ENCODE measurements at regions of chr14 and their contacts with region 1.

Region 1: DNA sequence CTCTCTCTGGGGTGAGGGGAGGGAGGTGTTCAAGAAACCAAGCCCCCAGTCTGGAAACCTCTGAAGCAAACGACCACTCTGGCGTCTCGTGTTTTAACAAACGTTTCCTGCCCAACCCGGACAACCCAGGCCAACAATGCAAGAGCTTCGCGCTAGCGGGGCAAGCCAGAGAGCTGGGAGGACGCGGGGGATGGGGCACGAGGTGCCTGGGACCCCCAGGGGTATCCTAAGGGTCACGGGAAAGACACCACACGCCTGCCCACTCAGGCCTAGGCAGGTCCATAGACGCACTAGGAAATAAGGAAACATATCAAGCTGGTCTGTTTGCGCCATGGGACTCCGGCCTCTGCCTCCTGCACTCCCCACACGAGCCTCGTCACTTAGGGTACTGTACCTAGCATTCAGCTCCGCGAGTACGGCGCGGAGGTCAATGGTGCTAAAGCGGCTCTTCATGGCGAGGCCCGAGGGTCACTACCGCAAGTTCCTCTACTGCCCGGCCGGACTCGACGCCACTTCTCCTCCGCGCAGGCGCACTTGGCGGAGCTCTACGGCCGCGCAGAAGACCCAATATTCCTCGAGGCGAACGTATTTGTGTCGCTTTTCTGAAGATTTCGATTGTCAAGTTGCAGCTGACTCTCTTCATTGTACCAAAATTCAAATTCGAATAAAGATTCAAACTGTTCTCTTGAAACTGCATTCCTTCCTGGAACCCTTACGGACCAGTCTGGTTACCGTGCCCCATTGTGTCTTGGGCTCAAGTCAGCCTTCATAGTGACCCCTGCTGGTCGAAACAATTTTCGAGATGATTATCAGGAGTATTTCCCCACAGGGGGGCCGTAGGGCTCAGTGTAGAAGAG is at the start of gene NEMF:
- DNase-seq: peak; percentile 83
- H3K4me3 ChIP-seq: peak within 1 kb of the TSS; percentile 54 to 96 (median 65)
- H3K27ac ChIP-seq: peak within 1 kb of the TSS; percentile 77
- H3K4me1 ChIP-seq: peaks cover 7% of the 10 kb centered on the region
- H3K27me3 ChIP-seq: no peaks in the 10 kb centered on the region
- CTCF ChIP-seq: peak; percentile 76 to 77
- total RNA-seq, gene NEMF: 44.8 to 57.7 TPM

Region 2: GRCh38 chr14:49620182-49621113 is 232.1 kb before region 1 on chr14 and contains the starts of genes MGAT2 and RPL36AL:
- CTCF ChIA-PET with region 1: interaction called, 10 read pairs
- dilution Hi-C with region 1: no loop called
- in situ Hi-C with region 1: no loop called
- intact Hi-C with region 1: no loop called
- DNase-seq: peak; percentile 98
- H3K4me3 ChIP-seq: peak within 1 kb of the TSS; percentile 97 to 100 (median 98)
- H3K27ac ChIP-seq: peak within 1 kb of the TSS; percentile 96
- H3K4me1 ChIP-seq: peaks cover 40% of the 10 kb centered on the region
- H3K27me3 ChIP-seq: no peaks in the 10 kb centered on the region
- CTCF ChIP-seq: peak in 1 of 2 donors; percentile 39
- total RNA-seq, gene MGAT2: 40.5 to 41.8 TPM
- total RNA-seq, gene RPL36AL: 78.7 to 214 TPM

Region 3: GRCh38 chr14:49808780-49809179 is 43.7 kb before region 1 on chr14:
- CTCF ChIA-PET with region 1: no interaction called
- dilution Hi-C with region 1: loop called (anchors 5 kb)
- in situ Hi-C with region 1: no loop called
- intact Hi-C with region 1: no loop called
- DNase-seq: no peak
- H3K4me3 ChIP-seq: no peak overlapping the region
- H3K27ac ChIP-seq: no peak overlapping the region
- H3K4me1 ChIP-seq: no peaks in the 10 kb centered on the region
- H3K27me3 ChIP-seq: no peaks in the 10 kb centered on the region
- CTCF ChIP-seq: no peak

Region 4: GRCh38 chr14:50109342-50109741 is 256.8 kb after region 1 on chr14:
- CTCF ChIA-PET with region 1: no interaction called
- dilution Hi-C with region 1: no loop called
- in situ Hi-C with region 1: no loop called
- intact Hi-C with region 1: loop called (anchors 1 kb)
- DNase-seq: no peak
- H3K4me3 ChIP-seq: no peak overlapping the region
- H3K27ac ChIP-seq: no peak overlapping the region
- H3K4me1 ChIP-seq: peaks cover under 1% of the 10 kb centered on the region
- H3K27me3 ChIP-seq: no peaks in the 10 kb centered on the region
- CTCF ChIP-seq: peak; percentile 16 to 19

Region 5: DNA sequence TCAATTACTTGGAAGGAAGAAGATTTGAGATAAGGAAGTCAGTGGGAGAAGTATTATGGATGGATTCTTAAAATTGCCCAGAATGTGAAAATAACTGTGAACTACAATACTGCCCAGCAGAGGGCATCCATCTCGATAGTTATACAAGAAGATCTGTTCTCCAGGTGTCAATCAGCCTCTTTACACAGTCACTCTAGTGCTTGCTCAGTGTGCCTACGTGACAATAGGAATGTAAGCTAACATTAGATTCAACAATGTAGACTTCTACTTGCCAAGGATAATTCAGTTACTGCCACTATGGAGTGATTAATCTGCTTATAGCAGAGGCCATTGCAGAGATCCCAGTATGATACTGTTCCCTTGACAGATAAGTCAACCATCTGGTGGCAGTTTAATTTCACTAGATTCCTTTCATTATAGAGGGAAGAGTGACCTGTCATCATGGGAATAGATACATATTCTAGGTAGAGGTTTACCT is 690.5 kb after region 1 on chr14:
- CTCF ChIA-PET with region 1: interaction called, 18 read pairs
- dilution Hi-C with region 1: no loop called
- in situ Hi-C with region 1: loop called in 1 of 2 experiments (anchors 25 kb)
- intact Hi-C with region 1: no loop called
- DNase-seq: peak; percentile 60
- H3K4me3 ChIP-seq: no peak overlapping the region
- H3K27ac ChIP-seq: no peak overlapping the region
- H3K4me1 ChIP-seq: peaks cover 7% of the 10 kb centered on the region
- H3K27me3 ChIP-seq: no peaks in the 10 kb centered on the region
- CTCF ChIP-seq: peak; percentile 54 to 63

Measured in mammary epithelial cell (primary cell).